ENCODE measurements at regions of chr2 and their contacts with region 1.

Region 1: GRCh38 chr2:68828887-68829708 is 42.1 kb downstream of the BMP10 start:
- DNase-seq: peak; percentile 88
- H3K4me3 ChIP-seq: no peak overlapping the region
- H3K27ac ChIP-seq: no peak overlapping the region
- H3K4me1 ChIP-seq: peaks cover 32% of the 10 kb centered on the region
- H3K27me3 ChIP-seq: no peaks in the 10 kb centered on the region
- CTCF ChIP-seq: peak in 1 of 2 donors; percentile 6

Region 2: DNA sequence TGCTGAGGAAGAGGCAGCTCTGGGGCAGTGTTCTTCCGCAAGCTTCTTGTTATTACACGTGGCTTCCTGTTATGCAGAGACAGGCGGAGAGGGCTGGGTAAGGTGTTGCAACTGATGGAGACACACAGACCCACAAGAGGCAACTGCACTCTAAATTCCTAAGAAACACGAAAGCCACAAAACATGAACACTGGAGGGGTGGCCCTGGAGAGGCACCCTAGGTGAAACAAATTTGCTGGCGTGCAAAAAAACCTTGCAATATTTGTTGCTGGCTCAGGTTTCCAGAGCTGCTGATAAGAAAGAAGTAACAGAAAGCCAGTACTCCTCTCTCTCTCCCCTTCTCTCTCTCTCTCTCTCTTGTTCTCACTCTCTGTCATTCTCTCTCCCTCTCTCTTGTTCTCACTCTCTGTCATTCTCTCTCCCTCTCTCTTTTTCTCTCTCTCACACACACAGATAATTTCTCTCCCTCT is 62.7 kb before region 1 on chr2:
- CTCF ChIA-PET with region 1: no interaction called
- dilution Hi-C with region 1: no loop called
- in situ Hi-C with region 1: no loop called
- intact Hi-C with region 1: no loop called
- DNase-seq: peak; percentile 65
- H3K4me3 ChIP-seq: no peak overlapping the region
- H3K27ac ChIP-seq: no peak overlapping the region
- H3K4me1 ChIP-seq: peaks cover 34% of the 10 kb centered on the region
- H3K27me3 ChIP-seq: no peaks in the 10 kb centered on the region
- CTCF ChIP-seq: no peak

Region 3: GRCh38 chr2:68807821-68808266 is 21.3 kb before region 1 on chr2:
- CTCF ChIA-PET with region 1: no interaction called
- dilution Hi-C with region 1: no loop called
- in situ Hi-C with region 1: no loop called
- intact Hi-C with region 1: loop called (anchors 2 kb)
- DNase-seq: peak; percentile 95
- H3K4me3 ChIP-seq: no peak overlapping the region
- H3K27ac ChIP-seq: peak overlapping the region; percentile 63
- H3K4me1 ChIP-seq: peaks cover 77% of the 10 kb centered on the region
- H3K27me3 ChIP-seq: no peaks in the 10 kb centered on the region
- CTCF ChIP-seq: no peak